ENCODE measurements at regions of chr11 and their contacts with region 1.

Region 1: GRCh38 chr11:56855217-56855616 is 106.7 kb upstream of the OR9G4 start:
- DNase-seq: no peak
- CTCF ChIP-seq: no peak

Region 2: DNA sequence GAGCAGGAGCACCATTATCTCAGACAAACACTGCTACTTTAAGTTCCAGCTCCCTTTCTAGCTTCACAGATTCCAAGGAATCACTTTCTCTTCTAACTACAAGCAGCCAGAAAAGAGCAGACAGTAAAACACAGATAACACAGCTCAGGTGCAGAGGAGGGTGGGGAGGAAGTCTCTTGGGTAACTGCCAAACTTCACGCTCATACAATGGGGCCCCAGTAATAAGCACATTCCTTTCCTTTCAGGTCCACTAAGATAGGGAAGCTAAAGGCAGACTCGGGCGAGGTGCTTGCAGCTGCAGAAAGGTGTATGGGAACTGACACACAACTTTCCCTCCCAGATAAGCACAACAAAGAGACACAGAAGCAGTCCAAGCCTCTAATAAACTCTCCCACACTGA is 37.6 kb before region 1 on chr11:
- in situ Hi-C with region 1: no loop called
- DNase-seq: no peak
- CTCF ChIP-seq: no peak

Region 3: DNA sequence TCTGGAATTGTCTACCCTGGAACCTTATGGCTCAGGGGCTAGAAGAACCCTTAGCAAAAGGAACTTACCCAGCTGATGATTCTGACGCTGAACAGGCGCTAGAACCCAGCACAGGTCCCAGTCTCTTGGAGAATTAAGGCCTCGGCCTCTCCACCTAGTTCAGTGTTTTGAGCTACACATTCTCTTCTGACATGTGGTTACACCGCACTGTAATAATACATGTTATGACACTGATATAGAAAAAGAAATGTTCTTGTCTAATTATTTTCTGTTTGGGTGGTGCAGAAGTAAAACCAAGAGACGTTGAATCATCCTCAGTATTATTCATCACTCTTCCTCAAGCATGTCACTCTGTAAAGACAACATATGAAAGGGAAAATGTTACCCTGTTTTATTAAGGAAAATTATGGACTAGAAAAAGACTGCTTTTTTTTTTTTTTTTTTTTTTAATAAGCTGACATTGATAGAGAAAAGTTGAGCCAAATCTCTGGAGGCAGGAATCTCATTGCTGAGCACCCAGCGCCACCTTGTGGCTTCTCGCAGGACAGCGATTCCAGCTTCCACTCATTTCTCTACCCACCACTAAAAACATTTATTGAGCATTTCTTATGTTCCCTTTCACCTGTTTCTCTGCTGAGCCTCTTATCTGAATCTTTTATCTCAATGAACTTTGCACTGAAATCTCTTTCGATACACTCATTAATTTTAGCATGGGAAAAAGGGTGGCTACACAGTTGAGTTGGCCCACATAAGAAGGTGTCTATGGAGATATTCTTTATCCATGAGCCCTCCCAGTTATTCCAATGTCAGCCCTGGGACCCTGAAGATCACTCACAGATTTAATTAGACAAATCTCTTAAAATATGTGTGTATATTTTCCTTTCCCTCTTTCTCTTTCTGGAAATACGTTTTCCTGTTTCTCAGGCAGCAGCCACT is 394.4 kb after region 1 on chr11:
- in situ Hi-C with region 1: loop called (anchors 10 kb)
- DNase-seq: peak; percentile 54
- CTCF ChIP-seq: peak; percentile 88

Measured in GM13977 (cell line).